ENCODE measurements at regions of chr12 and their contacts with region 1.

Region 1: GRCh38 chr12:94875525-94875924 is 128.0 kb downstream of the NDUFA12 start:
- DNase-seq: peak in 1 of 5 donors; percentile 23
- H3K4me3 ChIP-seq: no peak overlapping the region
- H3K27ac ChIP-seq: no peak overlapping the region
- H3K4me1 ChIP-seq: peaks cover 3% of the 10 kb centered on the region
- H3K27me3 ChIP-seq: no peaks in the 10 kb centered on the region
- CTCF ChIP-seq: peak in 1 of 3 donors; percentile 27
- EP300 ChIP-seq: no peak
- POLR2A ChIP-seq: no peak

Region 2: GRCh38 chr12:94545935-94546771 is 329.4 kb before region 1 on chr12:
- intact Hi-C with region 1: loop called in 3 of 4 experiments (anchors 5 to 10 kb)
- DNase-seq: peak; percentile 30 to 48 (median 40)
- H3K4me3 ChIP-seq: no peak overlapping the region
- H3K27ac ChIP-seq: no peak overlapping the region
- H3K4me1 ChIP-seq: no peaks in the 10 kb centered on the region
- H3K27me3 ChIP-seq: no peaks in the 10 kb centered on the region
- CTCF ChIP-seq: peak; percentile 19 to 59 (median 35)
- EP300 ChIP-seq: no peak
- POLR2A ChIP-seq: no peak

Region 3: GRCh38 chr12:94553130-94553519 is 322.4 kb before region 1 on chr12:
- intact Hi-C with region 1: loop called in 3 of 4 experiments (anchors 5 to 10 kb)
- DNase-seq: peak; percentile 44 to 73 (median 64)
- H3K4me3 ChIP-seq: no peak overlapping the region
- H3K27ac ChIP-seq: no peak overlapping the region
- H3K4me1 ChIP-seq: peaks cover 2% of the 10 kb centered on the region
- H3K27me3 ChIP-seq: no peaks in the 10 kb centered on the region
- CTCF ChIP-seq: no peak
- EP300 ChIP-seq: no peak
- POLR2A ChIP-seq: no peak

Region 4: GRCh38 chr12:94649349-94650142 is 226.0 kb before region 1 on chr12:
- intact Hi-C with region 1: loop called in 1 of 4 experiments (anchors 10 kb)
- DNase-seq: peak; percentile 46 to 73 (median 63)
- H3K4me3 ChIP-seq: peak overlapping the region; percentile 61
- H3K27ac ChIP-seq: peak overlapping the region; percentile 56 to 62
- H3K4me1 ChIP-seq: no peaks in the 10 kb centered on the region
- H3K27me3 ChIP-seq: no peaks in the 10 kb centered on the region
- CTCF ChIP-seq: peak; percentile 28 to 43 (median 28)
- EP300 ChIP-seq: no peak
- POLR2A ChIP-seq: no peak

Region 5: DNA sequence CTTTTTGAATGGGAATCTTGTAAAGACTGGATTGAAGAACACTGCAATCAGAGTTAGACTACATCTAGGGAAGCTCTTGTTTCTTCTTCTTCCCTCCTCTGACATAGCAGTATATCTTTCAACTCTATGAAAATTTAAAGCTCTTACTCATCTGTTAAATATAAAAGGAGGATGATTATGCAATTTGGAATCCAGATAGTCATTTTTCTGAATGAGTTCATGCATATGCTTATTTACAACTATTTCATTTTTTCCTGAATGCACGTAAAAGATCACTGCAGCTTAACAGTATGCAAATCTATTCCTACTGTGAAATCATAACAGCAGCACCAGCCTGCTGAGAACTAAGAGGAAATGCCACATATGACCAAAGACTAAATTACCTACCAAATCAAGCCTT is 91.7 kb before region 1 on chr12:
- intact Hi-C with region 1: loop called in 1 of 4 experiments (anchors 10 kb)
- DNase-seq: no peak
- H3K4me3 ChIP-seq: no peak overlapping the region
- H3K27ac ChIP-seq: no peak overlapping the region
- H3K4me1 ChIP-seq: no peaks in the 10 kb centered on the region
- H3K27me3 ChIP-seq: no peaks in the 10 kb centered on the region
- CTCF ChIP-seq: no peak
- EP300 ChIP-seq: no peak
- POLR2A ChIP-seq: no peak